Motor neuron (in vitro differentiated cells): ENCODE measurements at regions of chr6 and their contacts with region 1.

Region 1: GRCh38 chr6:165231581-165232561 is 77.5 kb downstream of the C6orf118 start:
- ATAC-seq: peak; percentile 53 to 90 (median 80)
- H3K4me3 ChIP-seq: no peak overlapping the region
- H3K27ac ChIP-seq: peak overlapping the region; percentile 37 to 42
- H3K4me1 ChIP-seq: peaks cover 30 to 34% of the 10 kb centered on the region in 2 donors

Region 2: GRCh38 chr6:164507206-164507940 is 724.5 kb before region 1 on chr6:
- in situ Hi-C with region 1: no loop called
- ATAC-seq: peak in 3 of 8 experiments; percentile 12 to 26 (median 19)
- H3K4me3 ChIP-seq: no peak overlapping the region
- H3K27ac ChIP-seq: no peak overlapping the region
- H3K4me1 ChIP-seq: no peaks in the 10 kb centered on the region

Region 3: GRCh38 chr6:164927288-164928056 is 304.4 kb before region 1 on chr6:
- in situ Hi-C with region 1: loop called in 1 of 9 experiments (anchors 25 kb)
- ATAC-seq: peak; percentile 75 to 99 (median 85)
- H3K4me3 ChIP-seq: peak overlapping the region; percentile 11 to 34 (median 18)
- H3K27ac ChIP-seq: peak overlapping the region; percentile 63 to 77
- H3K4me1 ChIP-seq: peaks cover 42 to 50% of the 10 kb centered on the region in 2 donors

Region 4: GRCh38 chr6:165055231-165055630 is 176.6 kb before region 1 on chr6:
- in situ Hi-C with region 1: loop called in 1 of 9 experiments (anchors 10 kb)
- ATAC-seq: peak in 2 of 8 experiments; percentile 76 to 92
- H3K4me3 ChIP-seq: no peak overlapping the region
- H3K27ac ChIP-seq: no peak overlapping the region
- H3K4me1 ChIP-seq: peaks cover 0 to 13% of the 10 kb centered on the region in 2 donors